Heart right ventricle (tissue), 16 donors: ENCODE measurements at regions of chr19 and their contacts with region 1.

Region 1: GRCh38 chr19:8526345-8527067 is 12.5 kb upstream of the ZNF414 start:
- DNase-seq: peak; percentile 91 to 94
- ATAC-seq: peak; percentile 77 to 92 (median 84)
- H3K4me3 ChIP-seq: peak overlapping the region; percentile 68 to 95 (median 79)
- H3K27ac ChIP-seq: peak overlapping the region; percentile 60 to 94 (median 90)
- H3K4me1 ChIP-seq: peaks cover 0 to 18% (median 6%) of the 10 kb centered on the region in 9 donors
- H3K27me3 ChIP-seq: no peaks in the 10 kb centered on the region
- CTCF ChIP-seq: no peak

Region 2: GRCh38 chr19:8580710-8581281 is 54.3 kb after region 1 on chr19:
- intact Hi-C with region 1: loop called in 2 of 10 experiments (anchors 5 to 10 kb)
- DNase-seq: peak; percentile 80 to 82
- ATAC-seq: peak; percentile 60 to 77 (median 66)
- H3K4me3 ChIP-seq: no peak overlapping the region
- H3K27ac ChIP-seq: no peak overlapping the region
- H3K4me1 ChIP-seq: peaks cover 0 to 38% (median 10%) of the 10 kb centered on the region in 9 donors
- H3K27me3 ChIP-seq: peaks cover 0 to 27% (median 13%) of the 10 kb centered on the region in 7 donors
- CTCF ChIP-seq: peak; percentile 99 to 100 (median 99)

Region 3: GRCh38 chr19:8832132-8833021 is 305.9 kb after region 1 on chr19 and contains the starts of genes MBD3L1 and ZNF558:
- intact Hi-C with region 1: loop called in 1 of 10 experiments (anchors 10 kb)
- DNase-seq: peak; percentile 99
- ATAC-seq: peak; percentile 94 to 99 (median 97)
- H3K4me3 ChIP-seq: peak within 1 kb of the TSS; percentile 67 to 97 (median 85)
- H3K27ac ChIP-seq: peak within 1 kb of the TSS; percentile 70 to 98 (median 93)
- H3K4me1 ChIP-seq: peaks cover 0 to 16% (median 9%) of the 10 kb centered on the region in 9 donors
- H3K27me3 ChIP-seq: no peaks in the 10 kb centered on the region
- CTCF ChIP-seq: peak in 8 of 9 donors; percentile 19 to 73 (median 49)
- total RNA-seq, gene MBD3L1: not detected
- total RNA-seq, gene ZNF558: 8.3 to 14.3 (median 11.8) TPM